ENCODE measurements at regions of chr14 and their contacts with region 1.

Region 1: GRCh38 chr14:50714450-50715073 is 46.5 kb upstream of the SAV1 start:
- DNase-seq: peak in 1 of 5 donors; percentile 16
- ATAC-seq: peak in 3 of 4 donors; percentile 28 to 77 (median 69)
- H3K4me3 ChIP-seq: no peak overlapping the region
- H3K27ac ChIP-seq: no peak overlapping the region
- H3K4me1 ChIP-seq: no peaks in the 10 kb centered on the region
- H3K27me3 ChIP-seq: no peaks in the 10 kb centered on the region
- CTCF ChIP-seq: peak; percentile 39 to 79 (median 60)
- POLR2A ChIP-seq: no peak

Region 2: GRCh38 chr14:50607181-50607580 is 107.4 kb before region 1 on chr14:
- intact Hi-C with region 1: loop called in 3 of 10 experiments (anchors 2 to 5 kb)
- DNase-seq: no peak
- ATAC-seq: no peak
- H3K4me3 ChIP-seq: no peak overlapping the region
- H3K27ac ChIP-seq: no peak overlapping the region
- H3K4me1 ChIP-seq: peaks cover 0 to 6% (median 0%) of the 10 kb centered on the region in 12 donors
- H3K27me3 ChIP-seq: no peaks in the 10 kb centered on the region
- CTCF ChIP-seq: no peak
- POLR2A ChIP-seq: no peak

Region 3: GRCh38 chr14:50619556-50620141 is 94.9 kb before region 1 on chr14:
- intact Hi-C with region 1: loop called in 9 of 10 experiments (anchors 1 to 10 kb)
- DNase-seq: no peak
- ATAC-seq: peak in 3 of 4 donors; percentile 32 to 53 (median 41)
- H3K4me3 ChIP-seq: no peak overlapping the region
- H3K27ac ChIP-seq: no peak overlapping the region
- H3K4me1 ChIP-seq: no peaks in the 10 kb centered on the region
- H3K27me3 ChIP-seq: no peaks in the 10 kb centered on the region
- CTCF ChIP-seq: peak; percentile 46 to 70 (median 58)
- POLR2A ChIP-seq: no peak